ENCODE measurements at regions of chr6 and their contacts with region 1.

Region 1: GRCh38 chr6:108541838-108542759 is 18.6 kb upstream of the FOXO3 start:
- DNase-seq: peak; percentile 84
- H3K4me3 ChIP-seq: no peak overlapping the region
- H3K27ac ChIP-seq: no peak overlapping the region
- H3K4me1 ChIP-seq: peaks cover 0 to 16% (median 5%) of the 10 kb centered on the region in 4 donors
- H3K27me3 ChIP-seq: no peaks in the 10 kb centered on the region
- CTCF ChIP-seq: peak; percentile 73 to 94 (median 93)
- EP300 ChIP-seq: no peak
- POLR2A ChIP-seq: no peak

Region 2: DNA sequence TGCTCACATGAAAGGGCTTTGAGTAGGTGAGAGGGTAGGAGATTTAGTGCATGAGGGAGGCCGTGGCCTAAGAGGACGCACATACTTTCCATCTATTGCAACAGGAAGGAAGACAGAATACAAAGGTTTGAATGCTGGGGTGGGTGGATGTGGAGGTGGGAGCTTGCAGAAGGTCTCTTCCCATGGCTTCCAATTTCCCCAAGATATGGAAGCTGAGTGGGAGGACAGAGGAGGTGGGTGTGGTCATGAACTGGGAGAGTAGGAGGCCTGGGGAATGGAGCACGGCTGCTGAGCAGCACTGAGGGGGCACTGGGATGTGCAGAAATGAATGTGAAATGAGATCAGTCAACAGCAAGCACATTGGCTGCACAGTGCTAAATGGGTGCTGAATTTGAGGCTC is 788.3 kb before region 1 on chr6:
- intact Hi-C with region 1: no loop called
- DNase-seq: no peak
- H3K4me3 ChIP-seq: no peak overlapping the region
- H3K27ac ChIP-seq: no peak overlapping the region
- H3K4me1 ChIP-seq: no peaks in the 10 kb centered on the region
- H3K27me3 ChIP-seq: peaks cover 0 to 4% (median 0%) of the 10 kb centered on the region in 3 donors
- CTCF ChIP-seq: no peak
- EP300 ChIP-seq: no peak
- POLR2A ChIP-seq: no peak

Region 3: GRCh38 chr6:108029226-108029921 is 512.7 kb before region 1 on chr6:
- intact Hi-C with region 1: no loop called
- DNase-seq: no peak
- H3K4me3 ChIP-seq: no peak overlapping the region
- H3K27ac ChIP-seq: no peak overlapping the region
- H3K4me1 ChIP-seq: no peaks in the 10 kb centered on the region
- H3K27me3 ChIP-seq: no peaks in the 10 kb centered on the region
- CTCF ChIP-seq: no peak
- EP300 ChIP-seq: no peak
- POLR2A ChIP-seq: no peak

Region 4: GRCh38 chr6:108835218-108835850 is 293.2 kb after region 1 on chr6:
- intact Hi-C with region 1: loop called (anchors 1 kb)
- DNase-seq: peak; percentile 94
- H3K4me3 ChIP-seq: no peak overlapping the region
- H3K27ac ChIP-seq: no peak overlapping the region
- H3K4me1 ChIP-seq: peaks cover 0 to 15% (median 0%) of the 10 kb centered on the region in 4 donors
- H3K27me3 ChIP-seq: no peaks in the 10 kb centered on the region
- CTCF ChIP-seq: peak; percentile 91 to 99 (median 95)
- EP300 ChIP-seq: no peak
- POLR2A ChIP-seq: no peak

Region 5: GRCh38 chr6:108896111-108896661 is 354.1 kb after region 1 on chr6:
- intact Hi-C with region 1: loop called (anchors 1 kb)
- DNase-seq: no peak
- H3K4me3 ChIP-seq: no peak overlapping the region
- H3K27ac ChIP-seq: peak overlapping the region; percentile 15 to 62 (median 48)
- H3K4me1 ChIP-seq: peaks cover 0 to 3% (median 0%) of the 10 kb centered on the region in 4 donors
- H3K27me3 ChIP-seq: no peaks in the 10 kb centered on the region
- CTCF ChIP-seq: no peak
- EP300 ChIP-seq: peak in 2 of 4 donors; percentile 50 to 56
- POLR2A ChIP-seq: no peak

Measured in sigmoid colon (tissue), 7 donors.